ENCODE measurements at regions of chr9 and their contacts with region 1.

Region 1: DNA sequence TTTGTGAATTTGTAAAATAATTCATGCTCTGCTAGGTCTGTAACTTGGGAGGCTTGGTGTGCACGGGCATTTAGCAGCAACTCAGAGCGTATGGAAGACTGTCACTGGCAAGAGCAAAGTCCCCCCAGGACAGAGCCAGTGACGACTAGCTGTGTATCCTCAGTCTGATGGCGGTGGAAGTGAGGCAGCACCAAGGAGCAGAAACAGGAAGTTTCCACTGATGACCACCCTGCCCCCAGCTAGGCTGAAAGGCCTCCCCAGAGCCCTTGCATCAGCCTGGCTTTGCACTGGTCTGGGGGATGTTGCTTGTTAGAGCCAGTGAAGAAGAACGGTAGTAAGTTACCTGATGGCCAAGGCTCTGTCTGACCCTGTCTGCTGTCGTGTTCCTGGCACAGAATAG is 66.8 kb upstream of the ABL1 start:
- DNase-seq: peak in 1 of 4 donors; percentile 22
- ATAC-seq: no peak
- H3K4me3 ChIP-seq: no peak overlapping the region
- H3K27ac ChIP-seq: no peak overlapping the region
- H3K4me1 ChIP-seq: peaks cover 12% of the 10 kb centered on the region
- H3K27me3 ChIP-seq: no peaks in the 10 kb centered on the region
- CTCF ChIP-seq: no peak
- POLR2A ChIP-seq: no peak

Region 2: GRCh38 chr9:130860458-130861316 is 92.4 kb after region 1 on chr9:
- intact Hi-C with region 1: loop called (anchors 5 kb)
- DNase-seq: peak; percentile 39 to 66 (median 56)
- ATAC-seq: peak; percentile 78
- H3K4me3 ChIP-seq: no peak overlapping the region
- H3K27ac ChIP-seq: peak overlapping the region in 2 of 4 donors; percentile 13 to 26
- H3K4me1 ChIP-seq: no peaks in the 10 kb centered on the region
- H3K27me3 ChIP-seq: no peaks in the 10 kb centered on the region
- CTCF ChIP-seq: peak in 3 of 7 experiments; percentile 2 to 13 (median 13)
- POLR2A ChIP-seq: no peak

Region 3: GRCh38 chr9:130940693-130941576 is 172.7 kb after region 1 on chr9:
- intact Hi-C with region 1: loop called (anchors 10 kb)
- DNase-seq: peak; percentile 88 to 90 (median 88)
- ATAC-seq: peak; percentile 88
- H3K4me3 ChIP-seq: no peak overlapping the region
- H3K27ac ChIP-seq: no peak overlapping the region
- H3K4me1 ChIP-seq: peaks cover 29% of the 10 kb centered on the region
- H3K27me3 ChIP-seq: peaks cover 0 to 45% of the 10 kb centered on the region in 2 donors
- CTCF ChIP-seq: peak; percentile 67 to 92 (median 90)
- POLR2A ChIP-seq: no peak